ENCODE measurements at regions of chr2 and their contacts with region 1.

Region 1: DNA sequence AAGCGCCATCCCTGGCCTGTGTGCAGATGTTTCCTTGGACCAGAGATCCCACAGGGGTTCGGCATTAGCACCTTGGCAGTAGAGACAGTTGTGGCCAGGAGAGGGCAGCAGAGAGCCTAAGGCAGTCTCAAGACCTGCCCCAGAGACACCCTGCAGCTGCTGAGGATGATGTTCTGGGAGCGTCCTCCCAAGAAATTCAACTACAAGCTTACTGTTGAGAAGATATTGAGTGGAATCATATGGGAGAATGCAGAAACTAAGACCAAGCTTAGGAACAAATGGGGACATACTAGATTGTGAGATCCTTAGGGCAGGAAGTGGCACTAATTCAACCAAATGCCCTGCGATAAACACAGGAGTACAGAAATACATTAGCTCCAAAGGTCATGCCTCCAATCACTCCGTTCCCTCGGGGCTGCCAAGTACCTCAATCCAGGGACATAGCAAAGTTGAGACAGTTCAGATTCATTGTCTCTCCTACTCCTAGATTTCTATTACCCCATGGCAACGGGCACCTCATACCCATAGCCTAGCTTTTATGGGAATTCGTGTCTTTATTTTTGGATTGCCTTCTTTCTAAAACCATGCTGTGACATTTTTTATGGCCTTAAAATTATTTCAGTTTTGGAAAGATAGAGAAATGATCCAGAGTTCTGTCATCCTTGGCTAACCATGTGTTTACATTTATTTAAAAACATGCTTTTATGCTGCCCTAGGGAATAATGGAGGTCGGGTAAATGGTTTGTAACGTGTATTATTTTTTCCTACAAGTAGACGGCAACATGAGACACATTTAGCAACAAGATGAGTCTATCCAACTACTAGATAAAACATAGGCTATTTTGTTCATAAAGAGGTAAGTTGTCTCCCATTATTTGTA is 2.2 kb upstream of the ERMN start:
- DNase-seq: peak; percentile 91
- ATAC-seq: peak; percentile 96
- H3K4me3 Mint-ChIP-seq: peak overlapping the region; percentile 27
- H3K27ac Mint-ChIP-seq: peak overlapping the region; percentile 56
- H3K4me1 Mint-ChIP-seq: peaks cover 41% of the 10 kb centered on the region
- H3K27me3 Mint-ChIP-seq: no peaks in the 10 kb centered on the region

Region 2: DNA sequence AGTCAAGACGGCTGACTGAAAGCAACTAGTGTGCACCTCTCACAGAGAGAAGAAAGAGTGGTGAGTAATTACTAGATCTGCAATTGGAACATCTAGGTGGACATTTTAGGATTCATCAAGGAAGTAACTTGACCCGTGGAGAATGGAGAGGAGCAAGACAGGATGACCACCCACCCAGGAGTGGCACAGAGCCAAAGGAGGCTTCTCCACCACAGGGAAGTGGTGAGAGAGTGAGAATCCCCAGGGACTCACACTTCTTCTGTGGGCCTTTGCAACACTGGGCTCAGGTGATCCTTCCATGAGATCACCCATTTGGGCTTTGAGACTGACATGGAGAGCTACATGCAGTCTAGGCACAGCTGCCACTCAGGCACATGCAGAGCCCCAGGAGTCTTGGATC is 203.1 kb before region 1 on chr2:
- CTCF ChIA-PET with region 1: no interaction called
- POLR2A ChIA-PET with region 1: no interaction called
- DNase-seq: no peak
- ATAC-seq: no peak
- H3K4me3 Mint-ChIP-seq: no peak overlapping the region
- H3K27ac Mint-ChIP-seq: no peak overlapping the region
- H3K4me1 Mint-ChIP-seq: no peaks in the 10 kb centered on the region
- H3K27me3 Mint-ChIP-seq: no peaks in the 10 kb centered on the region

Region 3: GRCh38 chr2:157302492-157303099 is 25.3 kb before region 1 on chr2:
- CTCF ChIA-PET with region 1: interaction called, 442 read pairs
- POLR2A ChIA-PET with region 1: no interaction called
- DNase-seq: peak; percentile 53
- ATAC-seq: peak; percentile 78
- H3K4me3 Mint-ChIP-seq: no peak overlapping the region
- H3K27ac Mint-ChIP-seq: no peak overlapping the region
- H3K4me1 Mint-ChIP-seq: peaks cover 23% of the 10 kb centered on the region
- H3K27me3 Mint-ChIP-seq: peaks cover 20% of the 10 kb centered on the region

Region 4: DNA sequence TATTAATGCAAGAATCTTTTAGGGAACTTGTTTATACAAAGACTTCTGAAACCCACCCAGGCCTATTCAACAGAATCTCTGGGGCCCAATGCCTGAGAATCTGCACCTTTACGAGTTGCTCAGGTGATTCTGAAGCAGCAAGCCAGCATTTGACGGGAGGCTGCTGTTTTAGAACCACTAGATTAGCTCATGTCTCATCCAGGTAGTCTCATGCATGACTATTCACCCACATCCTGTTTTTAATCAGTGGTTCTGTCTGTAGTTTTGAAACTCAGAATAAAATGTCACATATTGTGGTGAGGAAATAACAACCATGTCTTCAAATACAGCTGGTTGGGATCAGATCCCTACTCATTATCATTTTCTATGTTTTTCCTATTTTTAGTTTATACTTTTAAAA is 76.5 kb after region 1 on chr2:
- CTCF ChIA-PET with region 1: interaction called, 66 read pairs
- POLR2A ChIA-PET with region 1: interaction called, 7 read pairs
- DNase-seq: peak; percentile 78
- ATAC-seq: peak; percentile 97
- H3K4me3 Mint-ChIP-seq: peak overlapping the region; percentile 15
- H3K27ac Mint-ChIP-seq: peak overlapping the region; percentile 84
- H3K4me1 Mint-ChIP-seq: peaks cover 70% of the 10 kb centered on the region
- H3K27me3 Mint-ChIP-seq: no peaks in the 10 kb centered on the region

Region 5: GRCh38 chr2:157427003-157427921 is 99.4 kb after region 1 on chr2:
- CTCF ChIA-PET with region 1: interaction called, 65 read pairs
- POLR2A ChIA-PET with region 1: interaction called, 8 read pairs
- DNase-seq: no peak
- ATAC-seq: no peak
- H3K4me3 Mint-ChIP-seq: peak overlapping the region; percentile 23
- H3K27ac Mint-ChIP-seq: peak overlapping the region; percentile 64
- H3K4me1 Mint-ChIP-seq: peaks cover 80% of the 10 kb centered on the region
- H3K27me3 Mint-ChIP-seq: no peaks in the 10 kb centered on the region

Region 6: GRCh38 chr2:157460384-157460837 is 132.6 kb after region 1 on chr2:
- CTCF ChIA-PET with region 1: interaction called, 26 read pairs
- POLR2A ChIA-PET with region 1: no interaction called
- DNase-seq: no peak
- ATAC-seq: no peak
- H3K4me3 Mint-ChIP-seq: no peak overlapping the region
- H3K27ac Mint-ChIP-seq: peak overlapping the region; percentile 36
- H3K4me1 Mint-ChIP-seq: peaks cover 89% of the 10 kb centered on the region
- H3K27me3 Mint-ChIP-seq: no peaks in the 10 kb centered on the region

Region 7: GRCh38 chr2:157492189-157492773 is 164.4 kb after region 1 on chr2:
- CTCF ChIA-PET with region 1: interaction called, 128 read pairs
- POLR2A ChIA-PET with region 1: no interaction called
- DNase-seq: peak; percentile 85
- ATAC-seq: peak; percentile 85
- H3K4me3 Mint-ChIP-seq: no peak overlapping the region
- H3K27ac Mint-ChIP-seq: no peak overlapping the region
- H3K4me1 Mint-ChIP-seq: peaks cover 66% of the 10 kb centered on the region
- H3K27me3 Mint-ChIP-seq: no peaks in the 10 kb centered on the region